Activated T-helper 2 cell treated with anti-CD3 and anti-CD28 coated beads, Interferon-gamma antibody, Interleukin-2, Interleukin-4, amounts not matched to agents 10 μg/mL and 5 μg/mL and 100 μg/mL, durations not matched to agents 14 hours and 24 hours and 36 hours (primary cell): ENCODE measurements at regions of chr16 and their contacts with region 1.

Region 1: DNA sequence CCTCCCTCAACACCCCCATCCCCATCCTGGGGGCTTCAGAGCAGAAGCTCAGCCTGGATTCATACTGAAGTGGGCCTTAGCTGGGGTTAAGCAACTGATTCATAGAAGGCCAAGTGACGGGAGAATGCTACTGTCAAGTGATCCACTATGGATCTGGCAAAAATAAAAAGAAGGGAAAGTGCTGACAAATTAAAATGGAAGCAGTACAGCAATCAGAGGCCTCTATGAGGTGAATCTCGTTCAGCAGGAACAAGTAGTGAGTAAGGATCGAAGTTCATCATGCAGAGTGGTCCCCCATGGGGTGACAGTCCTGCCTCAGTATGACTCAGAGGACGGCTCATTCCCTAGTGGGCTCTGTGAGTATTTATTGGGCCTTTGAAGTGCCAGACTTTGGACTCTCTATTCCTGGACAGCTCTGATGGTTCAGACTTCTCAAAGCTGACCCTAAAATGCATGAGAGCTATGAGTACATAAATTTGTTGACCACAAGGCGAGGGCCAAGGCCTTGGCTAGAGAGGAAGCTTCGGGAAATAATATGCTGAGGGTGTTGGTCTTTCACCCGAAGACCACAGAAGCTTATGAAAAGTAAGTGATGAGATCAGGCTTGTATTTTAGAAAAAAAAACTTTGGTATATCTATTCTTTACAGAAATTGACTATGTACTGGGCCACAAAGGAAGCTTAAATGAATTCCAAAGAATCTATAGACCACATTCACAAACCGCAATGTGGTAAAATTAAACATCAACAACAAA is 5.3 kb upstream of the NSMCE1 start:
- DNase-seq: peak; percentile 53
- H3K4me3 Mint-ChIP-seq: peak overlapping the region; percentile 51
- H3K27ac Mint-ChIP-seq: peak overlapping the region; percentile 98
- H3K4me1 Mint-ChIP-seq: peaks cover 64% of the 10 kb centered on the region
- H3K27me3 Mint-ChIP-seq: no peaks in the 10 kb centered on the region

Region 2: DNA sequence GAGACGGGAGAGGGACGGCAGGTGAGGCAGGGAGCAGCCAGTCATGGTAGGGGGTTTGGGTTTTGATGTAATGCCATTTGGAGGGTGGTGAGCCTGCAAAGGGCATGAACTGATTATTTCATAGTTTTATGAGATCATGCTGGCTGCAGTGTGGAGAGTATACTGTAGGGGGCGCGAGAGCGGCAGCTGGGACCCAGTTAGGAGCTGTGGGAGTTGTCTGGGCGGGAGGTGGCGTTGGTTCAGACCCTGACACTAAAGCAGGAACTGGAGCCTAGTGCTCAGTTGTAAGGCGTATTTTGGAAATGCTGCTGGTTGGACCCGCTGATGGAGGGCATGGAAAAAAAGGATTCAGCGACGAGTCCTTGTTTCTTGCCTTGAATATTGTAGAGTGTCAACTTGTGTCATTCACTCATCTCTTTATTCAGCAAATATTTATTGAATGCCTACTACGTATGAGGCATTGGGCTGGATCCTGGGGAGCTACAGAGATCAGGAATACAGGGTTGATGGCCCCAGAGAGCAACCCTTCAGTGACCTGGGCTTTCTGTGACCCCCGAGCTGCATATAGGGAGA is 94.3 kb before region 1 on chr16:
- intact Hi-C with region 1: loop called (anchors 2 kb)
- DNase-seq: peak; percentile 81
- H3K4me3 Mint-ChIP-seq: no peak overlapping the region
- H3K27ac Mint-ChIP-seq: peak overlapping the region; percentile 40
- H3K4me1 Mint-ChIP-seq: peaks cover 38% of the 10 kb centered on the region
- H3K27me3 Mint-ChIP-seq: no peaks in the 10 kb centered on the region

Region 3: GRCh38 chr16:27231692-27232060 is 42.2 kb before region 1 on chr16:
- intact Hi-C with region 1: no loop called
- DNase-seq: no peak
- H3K4me3 Mint-ChIP-seq: peak overlapping the region; percentile 80
- H3K27ac Mint-ChIP-seq: peak overlapping the region; percentile 97
- H3K4me1 Mint-ChIP-seq: peaks cover 67% of the 10 kb centered on the region
- H3K27me3 Mint-ChIP-seq: no peaks in the 10 kb centered on the region

Region 4: DNA sequence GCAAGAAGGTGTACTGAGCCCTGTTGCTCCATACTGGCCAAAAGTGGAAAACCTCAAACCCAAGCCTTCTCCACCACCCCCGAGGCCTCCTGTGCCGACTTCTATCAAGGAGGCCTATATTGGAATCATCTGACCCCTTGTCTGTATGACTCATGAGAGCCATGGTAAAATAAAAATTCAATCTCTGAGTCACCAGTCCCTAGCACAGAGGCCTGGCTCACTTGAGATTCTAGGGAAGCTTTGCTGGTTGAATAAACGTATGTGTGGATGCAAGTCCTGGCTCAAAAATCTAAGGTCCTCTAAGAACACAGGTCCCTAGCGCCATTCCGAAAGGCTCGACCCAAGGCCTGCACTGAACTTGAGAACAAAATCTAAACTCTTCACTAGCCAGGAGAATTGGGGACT is 20.3 kb before region 1 on chr16:
- intact Hi-C with region 1: loop called (anchors 1 kb)
- DNase-seq: no peak
- H3K4me3 Mint-ChIP-seq: peak overlapping the region; percentile 54
- H3K27ac Mint-ChIP-seq: peak overlapping the region; percentile 97
- H3K4me1 Mint-ChIP-seq: peaks cover 82% of the 10 kb centered on the region
- H3K27me3 Mint-ChIP-seq: no peaks in the 10 kb centered on the region

Region 5: GRCh38 chr16:27301236-27301861 is 27.5 kb after region 1 on chr16:
- intact Hi-C with region 1: loop called (anchors 1 kb)
- DNase-seq: no peak
- H3K4me3 Mint-ChIP-seq: no peak overlapping the region
- H3K27ac Mint-ChIP-seq: no peak overlapping the region
- H3K4me1 Mint-ChIP-seq: peaks cover 43% of the 10 kb centered on the region
- H3K27me3 Mint-ChIP-seq: no peaks in the 10 kb centered on the region

Region 6: DNA sequence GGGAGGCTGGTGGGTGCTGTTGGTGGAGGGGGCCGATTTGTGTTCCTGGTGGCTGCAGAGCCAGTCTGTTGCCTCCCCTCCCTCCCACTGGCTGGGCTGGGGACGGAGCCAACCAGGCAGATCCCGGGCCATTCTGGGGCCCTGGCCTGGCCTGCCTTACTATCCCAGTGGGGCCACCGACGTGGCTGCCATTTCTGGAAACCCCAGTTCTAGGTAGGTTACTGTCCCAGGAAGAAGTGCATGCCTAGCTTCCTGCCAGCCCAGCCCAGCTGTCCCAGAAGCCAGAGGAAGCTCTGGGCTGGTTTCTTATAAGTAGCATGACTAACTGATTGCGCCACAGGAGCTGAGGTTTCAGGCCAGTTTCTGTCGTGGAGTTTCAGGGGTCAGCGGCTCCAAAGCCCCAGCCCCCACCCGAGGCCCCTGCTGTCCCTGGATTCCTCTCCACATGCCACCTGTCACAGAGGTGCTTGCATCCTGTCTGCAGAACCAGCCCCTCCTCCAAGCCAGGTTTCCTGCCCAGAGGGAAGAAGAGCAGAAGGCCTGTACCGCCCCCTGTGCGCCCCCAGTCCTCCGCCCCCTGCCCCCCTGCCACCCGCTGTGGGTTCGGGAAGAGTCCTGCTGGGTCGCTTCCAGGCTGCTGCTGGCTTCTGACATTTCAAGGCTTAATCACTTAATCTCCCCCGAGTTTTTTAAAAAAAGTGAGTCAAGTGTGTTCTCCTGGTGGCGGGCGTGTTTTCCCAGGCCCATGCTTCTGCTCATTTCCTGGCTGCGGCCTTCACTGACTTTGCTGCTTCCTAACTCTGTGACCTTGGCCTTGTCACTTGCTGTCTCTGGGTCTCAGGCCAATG is 53.1 kb after region 1 on chr16:
- intact Hi-C with region 1: no loop called
- DNase-seq: no peak
- H3K4me3 Mint-ChIP-seq: peak overlapping the region; percentile 54
- H3K27ac Mint-ChIP-seq: peak overlapping the region; percentile 89
- H3K4me1 Mint-ChIP-seq: peaks cover 69% of the 10 kb centered on the region
- H3K27me3 Mint-ChIP-seq: no peaks in the 10 kb centered on the region

Region 7: DNA sequence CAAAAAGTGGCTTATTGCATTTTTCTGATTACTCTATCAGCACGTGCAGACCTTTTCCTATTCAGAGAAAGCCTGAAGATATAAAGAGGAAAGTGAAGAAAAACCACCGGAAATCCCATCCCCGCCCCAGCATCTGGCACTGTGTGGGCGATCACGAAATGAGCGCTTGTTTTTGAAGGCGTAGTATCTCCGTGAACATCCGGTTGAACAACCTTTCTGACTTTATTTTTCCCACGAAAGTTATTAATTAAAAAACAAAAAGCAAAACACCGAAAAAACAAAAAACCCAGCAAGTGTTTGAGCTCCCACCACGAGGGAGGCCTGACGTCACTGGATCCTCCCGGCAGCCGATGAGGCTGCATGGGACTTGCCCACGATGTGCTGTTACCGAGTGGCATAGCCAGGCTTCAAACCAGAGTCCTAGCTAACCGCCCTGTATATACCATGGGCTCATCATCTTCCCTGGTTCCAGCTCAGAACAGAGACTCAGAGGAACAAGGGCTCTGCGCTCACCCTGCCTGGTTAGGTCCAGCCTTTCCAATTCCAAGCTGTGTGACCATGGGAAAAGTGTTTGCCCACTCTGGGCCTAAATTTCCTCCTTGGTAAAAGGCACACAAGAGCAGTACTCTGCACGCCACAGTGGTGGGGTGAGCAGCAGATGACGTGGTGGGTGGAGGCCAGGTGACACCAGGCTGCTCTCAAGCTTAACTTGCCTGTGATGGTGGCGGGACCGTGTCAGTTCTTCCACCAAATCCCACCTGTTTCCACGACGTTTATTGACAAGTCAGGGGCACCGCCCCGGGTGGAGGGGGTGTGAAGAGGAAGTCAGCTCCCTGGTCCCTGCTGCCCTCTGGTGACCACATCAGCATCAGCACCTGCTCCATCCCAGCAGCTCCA is 93.9 kb after region 1 on chr16:
- intact Hi-C with region 1: loop called (anchors 2 kb)
- DNase-seq: peak; percentile 81
- H3K4me3 Mint-ChIP-seq: peak overlapping the region; percentile 53
- H3K27ac Mint-ChIP-seq: peak overlapping the region; percentile 99
- H3K4me1 Mint-ChIP-seq: peaks cover 65% of the 10 kb centered on the region
- H3K27me3 Mint-ChIP-seq: no peaks in the 10 kb centered on the region